ENCODE measurements at regions of chr16 and their contacts with region 1.

Region 1: DNA sequence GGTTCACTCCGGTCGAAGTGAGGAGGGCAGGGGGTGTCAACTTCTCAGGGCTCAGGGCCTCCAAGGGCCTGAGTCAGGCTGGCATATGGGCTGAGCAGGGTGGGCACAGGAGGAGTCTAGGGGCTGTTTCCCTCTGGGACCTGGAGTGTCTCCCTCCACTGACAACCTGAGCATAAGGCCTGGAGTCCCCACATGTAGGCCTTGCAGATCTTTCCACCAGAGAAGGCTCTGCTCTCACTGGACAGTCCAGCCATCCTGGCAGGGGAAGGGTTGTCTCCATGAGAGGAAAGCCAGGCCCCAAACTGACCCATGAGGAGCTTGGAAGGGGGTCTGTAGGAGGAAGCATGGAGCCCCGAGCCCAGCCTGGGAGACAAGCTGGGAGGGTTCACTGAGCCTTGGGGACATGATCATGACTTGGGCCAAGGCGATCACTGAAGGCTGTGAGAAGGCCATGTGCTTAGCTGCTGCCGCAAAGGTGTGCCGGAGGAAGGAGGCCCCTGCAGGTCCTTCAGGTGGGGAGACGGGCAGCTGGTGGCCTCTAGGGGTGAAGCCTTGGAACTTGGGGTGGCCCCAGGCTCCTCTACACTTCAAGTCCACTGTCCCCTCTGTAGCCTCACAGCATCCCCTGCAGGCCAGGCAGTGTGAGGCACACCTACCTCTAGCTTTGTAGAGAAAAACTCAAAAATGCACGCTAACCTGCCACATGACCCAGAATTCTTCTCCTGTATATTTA is 9.9 kb downstream of the CMTM2 start:
- DNase-seq: peak; percentile 79
- ATAC-seq: peak; percentile 96
- H3K4me3 Mint-ChIP-seq: peak overlapping the region; percentile 69
- H3K27ac Mint-ChIP-seq: no peak overlapping the region
- H3K4me1 Mint-ChIP-seq: peaks cover 36% of the 10 kb centered on the region
- H3K27me3 Mint-ChIP-seq: no peaks in the 10 kb centered on the region
- CTCF ChIP-seq: peak; percentile 81

Region 2: DNA sequence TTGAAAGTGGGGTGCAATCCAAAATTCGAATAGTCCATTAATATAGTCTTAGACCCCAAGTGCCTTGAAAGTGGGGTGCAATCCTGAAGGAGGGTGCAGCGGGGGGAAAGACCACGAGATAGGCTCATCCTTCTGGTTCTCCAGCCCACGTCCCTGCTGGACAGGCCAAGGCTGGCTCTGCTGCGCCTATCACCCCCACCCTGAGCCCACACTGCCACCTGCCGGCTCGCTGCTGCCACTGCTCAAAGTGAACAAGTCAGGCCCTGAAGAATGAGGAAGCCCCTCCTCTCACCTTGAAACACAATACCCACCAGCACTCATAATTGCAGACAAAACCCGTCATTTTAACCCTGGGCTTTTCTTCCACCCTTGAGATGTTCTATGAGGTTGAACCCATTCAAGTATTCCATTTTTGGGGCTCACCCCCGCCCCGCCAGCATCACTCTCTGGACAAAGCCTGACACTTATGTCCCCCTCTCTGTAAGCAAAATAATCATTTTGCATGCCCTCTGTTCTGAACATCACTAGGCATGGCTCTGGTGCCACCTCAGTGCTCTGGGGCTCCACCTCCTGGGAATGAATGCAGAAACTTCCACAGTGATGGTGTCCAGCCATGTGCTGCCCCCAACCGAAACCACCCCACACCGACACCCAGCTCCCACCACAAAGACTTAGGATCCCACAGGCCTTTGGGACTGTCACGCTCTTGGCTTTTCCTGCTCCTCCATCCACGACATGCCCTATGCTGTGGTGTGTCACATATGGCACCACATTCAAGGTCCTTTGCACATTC is 105.3 kb before region 1 on chr16:
- CTCF ChIA-PET with region 1: interaction called, 29 read pairs
- POLR2A ChIA-PET with region 1: no interaction called
- intact Hi-C with region 1: no loop called
- DNase-seq: peak; percentile 81
- ATAC-seq: peak; percentile 85
- H3K4me3 Mint-ChIP-seq: no peak overlapping the region
- H3K27ac Mint-ChIP-seq: no peak overlapping the region
- H3K4me1 Mint-ChIP-seq: peaks cover 24% of the 10 kb centered on the region
- H3K27me3 Mint-ChIP-seq: no peaks in the 10 kb centered on the region
- CTCF ChIP-seq: peak; percentile 90

Region 3: GRCh38 chr16:66511615-66512500 is 77.3 kb before region 1 on chr16:
- CTCF ChIA-PET with region 1: interaction called, 10 read pairs
- POLR2A ChIA-PET with region 1: no interaction called
- intact Hi-C with region 1: no loop called
- DNase-seq: no peak
- ATAC-seq: no peak
- H3K4me3 Mint-ChIP-seq: no peak overlapping the region
- H3K27ac Mint-ChIP-seq: no peak overlapping the region
- H3K4me1 Mint-ChIP-seq: peaks cover 25% of the 10 kb centered on the region
- H3K27me3 Mint-ChIP-seq: no peaks in the 10 kb centered on the region
- CTCF ChIP-seq: no peak

Region 4: GRCh38 chr16:66552286-66553177 is 36.6 kb before region 1 on chr16 and contains the start of gene CKLF:
- CTCF ChIA-PET with region 1: interaction called, 10 read pairs
- POLR2A ChIA-PET with region 1: interaction called, 11 read pairs
- intact Hi-C with region 1: no loop called
- DNase-seq: peak; percentile 90
- ATAC-seq: peak; percentile 76
- H3K4me3 Mint-ChIP-seq: peak within 1 kb of the TSS; percentile 88
- H3K27ac Mint-ChIP-seq: peak within 1 kb of the TSS; percentile 92
- H3K4me1 Mint-ChIP-seq: peaks cover 63% of the 10 kb centered on the region
- H3K27me3 Mint-ChIP-seq: no peaks in the 10 kb centered on the region
- CTCF ChIP-seq: no peak
- total RNA-seq, gene CKLF: 99.0 to 99.7 TPM

Region 5: GRCh38 chr16:66562407-66562806 is 26.7 kb before region 1 on chr16:
- CTCF ChIA-PET with region 1: interaction called, 29 read pairs
- POLR2A ChIA-PET with region 1: interaction called, 3 read pairs
- intact Hi-C with region 1: no loop called
- DNase-seq: no peak
- ATAC-seq: no peak
- H3K4me3 Mint-ChIP-seq: no peak overlapping the region
- H3K27ac Mint-ChIP-seq: peak overlapping the region; percentile 64
- H3K4me1 Mint-ChIP-seq: peaks cover 56% of the 10 kb centered on the region
- H3K27me3 Mint-ChIP-seq: no peaks in the 10 kb centered on the region
- CTCF ChIP-seq: peak; percentile 44

Region 6: DNA sequence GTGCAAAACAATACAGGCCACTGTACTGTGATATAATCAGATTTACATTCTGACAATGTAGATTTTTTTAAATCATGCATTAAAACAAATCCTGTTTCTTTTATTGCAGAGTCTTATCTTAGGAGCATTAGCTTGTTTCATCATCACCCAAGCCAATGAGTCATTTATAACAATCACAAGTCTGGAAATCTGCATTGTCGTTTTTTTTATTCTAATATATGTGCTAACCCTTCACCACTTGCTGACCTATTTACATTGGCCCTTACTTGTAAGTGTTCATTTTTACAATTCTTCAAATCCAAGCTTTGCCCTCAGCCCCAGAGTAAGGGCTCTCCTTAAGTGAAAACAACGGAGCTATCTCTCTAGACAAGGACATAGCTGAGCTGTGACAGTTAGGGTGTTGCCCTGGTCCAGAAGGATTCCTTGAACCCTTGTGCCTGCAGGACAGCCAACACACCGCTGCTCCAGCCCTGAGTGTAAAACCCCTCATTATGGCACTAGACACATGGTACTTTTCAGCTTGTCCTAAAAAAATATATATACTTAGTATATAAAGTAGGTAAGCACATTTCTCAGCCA is 19.2 kb before region 1 on chr16:
- CTCF ChIA-PET with region 1: interaction called, 19 read pairs
- POLR2A ChIA-PET with region 1: no interaction called
- intact Hi-C with region 1: no loop called
- DNase-seq: no peak
- ATAC-seq: no peak
- H3K4me3 Mint-ChIP-seq: no peak overlapping the region
- H3K27ac Mint-ChIP-seq: no peak overlapping the region
- H3K4me1 Mint-ChIP-seq: peaks cover 16% of the 10 kb centered on the region
- H3K27me3 Mint-ChIP-seq: no peaks in the 10 kb centered on the region
- CTCF ChIP-seq: no peak